Panc1 (cell line): ENCODE measurements at regions of chr12 and their contacts with region 1.

Region 1: GRCh38 chr12:132153501-132154340 is 9.5 kb downstream of the NOC4L start:
- DNase-seq: no peak
- ATAC-seq: peak; percentile 96
- H3K4me3 ChIP-seq: no peak overlapping the region
- H3K27ac ChIP-seq: no peak overlapping the region
- H3K4me1 ChIP-seq: no peaks in the 10 kb centered on the region
- H3K27me3 ChIP-seq: no peaks in the 10 kb centered on the region
- CTCF ChIP-seq: peak; percentile 98

Region 2: GRCh38 chr12:132168311-132169031 is 14.8 kb after region 1 on chr12:
- CTCF ChIA-PET with region 1: no interaction called
- POLR2A ChIA-PET with region 1: no interaction called
- in situ Hi-C with region 1: no loop called
- intact Hi-C with region 1: no loop called
- DNase-seq: no peak
- ATAC-seq: 0 out of 2 replicates have a peak, but pooled peaks have one; percentile 22
- H3K4me3 ChIP-seq: no peak overlapping the region
- H3K27ac ChIP-seq: no peak overlapping the region
- H3K4me1 ChIP-seq: peaks cover 7% of the 10 kb centered on the region
- H3K27me3 ChIP-seq: no peaks in the 10 kb centered on the region
- CTCF ChIP-seq: no peak

Region 3: GRCh38 chr12:132218915-132219314 is 65.2 kb after region 1 on chr12:
- CTCF ChIA-PET with region 1: no interaction called
- POLR2A ChIA-PET with region 1: no interaction called
- in situ Hi-C with region 1: no loop called
- intact Hi-C with region 1: loop called (anchors 10 kb)
- DNase-seq: no peak
- ATAC-seq: peak; percentile 68
- H3K4me3 ChIP-seq: no peak overlapping the region
- H3K27ac ChIP-seq: no peak overlapping the region
- H3K4me1 ChIP-seq: 0 out of 2 replicates have a peak, but pooled peaks cover 2% of the 10 kb centered on the region
- H3K27me3 ChIP-seq: peaks cover 4% of the 10 kb centered on the region; the same call in 1 of the 2 replicates
- CTCF ChIP-seq: peak; percentile 77

Region 4: GRCh38 chr12:132400011-132400641 is 246.4 kb after region 1 on chr12:
- CTCF ChIA-PET with region 1: no interaction called
- POLR2A ChIA-PET with region 1: no interaction called
- in situ Hi-C with region 1: no loop called
- intact Hi-C with region 1: loop called (anchors 10 kb)
- DNase-seq: no peak
- ATAC-seq: no peak; the same call in 1 of the 2 replicates
- H3K4me3 ChIP-seq: no peak overlapping the region
- H3K27ac ChIP-seq: no peak overlapping the region
- H3K4me1 ChIP-seq: no peaks in the 10 kb centered on the region; the same call in 1 of the 2 replicates
- H3K27me3 ChIP-seq: no peaks in the 10 kb centered on the region
- CTCF ChIP-seq: no peak